Esophagus squamous epithelium (tissue), 5 donors: ENCODE measurements at regions of chr2 and their contacts with region 1.

Region 1: DNA sequence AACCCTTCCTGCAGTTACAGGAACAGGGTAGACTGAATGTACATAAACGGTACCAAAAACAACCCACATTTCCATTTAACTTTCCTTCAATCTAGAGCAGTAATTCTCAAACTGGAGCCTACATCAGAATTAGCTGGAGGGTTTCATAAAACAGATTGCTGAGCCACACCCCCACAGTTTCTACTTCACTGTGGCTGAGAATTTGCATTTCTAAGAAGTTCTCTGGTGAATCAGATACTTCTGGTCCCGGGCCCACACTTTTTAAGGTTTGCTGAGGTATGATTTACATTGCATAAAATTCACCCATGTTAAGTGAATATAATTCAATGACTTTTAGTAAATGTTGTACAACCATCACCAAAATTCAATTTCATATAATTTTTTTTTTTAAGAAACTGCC is 113.7 kb downstream of the SRBD1 start:
- DNase-seq: no peak
- H3K4me3 ChIP-seq: no peak overlapping the region
- H3K27ac ChIP-seq: no peak overlapping the region
- H3K4me1 ChIP-seq: no peaks in the 10 kb centered on the region
- H3K27me3 ChIP-seq: no peaks in the 10 kb centered on the region
- CTCF ChIP-seq: no peak
- POLR2A ChIP-seq: no peak

Region 2: DNA sequence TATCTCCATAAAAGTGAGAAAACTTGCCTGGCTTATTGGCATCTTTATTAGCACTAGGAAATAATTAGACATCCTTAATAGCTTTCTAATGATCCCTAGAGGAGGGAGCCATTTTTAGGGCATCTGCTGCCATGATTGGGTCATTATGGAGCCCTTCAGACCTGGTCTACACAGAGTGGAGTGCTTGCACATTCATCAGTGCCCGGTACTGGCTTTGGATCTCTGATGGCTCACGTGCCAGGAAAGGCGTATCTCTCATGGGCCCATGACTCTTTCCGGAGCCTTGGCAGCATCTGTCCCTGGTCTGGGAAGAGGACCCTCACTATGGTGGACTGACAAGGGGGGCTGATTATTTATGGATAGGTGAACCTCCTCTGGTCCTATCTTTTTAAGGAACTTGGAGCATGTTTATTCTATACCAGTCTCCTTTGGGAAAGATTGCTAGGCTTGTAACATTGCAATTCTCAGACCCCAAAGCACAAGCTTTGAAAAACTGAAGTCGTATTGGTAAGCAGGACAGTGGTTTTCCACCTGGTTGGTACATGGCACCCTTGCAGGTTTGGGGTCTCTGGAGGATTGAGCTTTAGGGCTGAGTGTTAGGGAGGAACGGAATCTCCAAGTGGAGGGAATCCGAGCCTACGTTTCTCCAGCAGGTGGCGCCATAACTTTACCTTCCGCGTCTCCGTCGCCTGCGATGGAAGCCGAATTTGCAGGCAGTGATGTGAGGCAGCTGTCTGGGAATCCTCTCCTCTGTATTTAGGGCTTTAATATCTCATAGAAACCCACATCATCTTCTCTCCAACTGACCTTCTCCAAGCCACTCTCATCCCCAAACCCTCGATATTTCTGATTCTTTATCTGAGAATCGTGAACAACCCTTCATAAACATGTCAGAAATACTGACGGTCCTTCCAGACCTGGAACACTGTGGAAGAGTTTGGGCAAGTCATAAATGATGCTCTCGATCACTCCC is 515.9 kb before region 1 on chr2:
- intact Hi-C with region 1: loop called (anchors 5 kb)
- DNase-seq: no peak
- H3K4me3 ChIP-seq: no peak overlapping the region
- H3K27ac ChIP-seq: no peak overlapping the region
- H3K4me1 ChIP-seq: no peaks in the 10 kb centered on the region
- H3K27me3 ChIP-seq: peaks cover 0 to 76% (median 0%) of the 10 kb centered on the region in 4 donors
- CTCF ChIP-seq: peak; percentile 72 to 89 (median 79)
- POLR2A ChIP-seq: no peak

Region 3: GRCh38 chr2:45000921-45001868 is 496.2 kb before region 1 on chr2:
- intact Hi-C with region 1: no loop called
- DNase-seq: no peak
- H3K4me3 ChIP-seq: peak overlapping the region; percentile 9 to 57 (median 24)
- H3K27ac ChIP-seq: no peak overlapping the region
- H3K4me1 ChIP-seq: peaks cover 0 to 35% (median 19%) of the 10 kb centered on the region in 3 donors
- H3K27me3 ChIP-seq: peaks cover 27 to 100% (median 50%) of the 10 kb centered on the region in 4 donors
- CTCF ChIP-seq: no peak
- POLR2A ChIP-seq: no peak